Activated naive CD4-positive, alpha-beta T cell treated with anti-CD3 and anti-CD28 coated beads for 36 hours (primary cell): ENCODE measurements at regions of chrX and their contacts with region 1.

Region 1: DNA sequence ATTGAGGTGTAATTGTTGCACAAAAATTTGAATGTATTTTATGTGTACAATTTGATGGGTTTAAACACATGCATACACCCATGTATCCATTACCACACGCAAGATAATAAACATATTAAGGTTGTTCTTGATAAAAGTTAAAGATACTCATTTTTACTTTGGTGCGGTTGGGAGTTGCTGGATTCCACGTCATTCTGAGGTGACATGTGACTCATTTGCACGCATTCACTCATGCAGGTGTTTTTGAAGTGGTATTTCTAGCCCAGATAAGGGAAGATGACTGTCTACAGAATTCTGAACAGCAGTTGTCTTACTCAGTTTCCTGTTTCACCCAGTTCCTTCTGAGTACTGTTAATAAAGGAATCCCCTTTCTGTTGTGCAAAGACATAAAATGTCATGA is 142.0 kb downstream of the RTL3 start:
- DNase-seq: peak; percentile 76
- H3K4me3 Mint-ChIP-seq: no peak overlapping the region
- H3K27ac Mint-ChIP-seq: peak overlapping the region; percentile 86
- H3K4me1 Mint-ChIP-seq: peaks cover 40% of the 10 kb centered on the region
- H3K27me3 Mint-ChIP-seq: no peaks in the 10 kb centered on the region

Region 2: GRCh38 chrX:77293331-77293995 is 1223.7 kb before region 1 on chrX:
- CTCF ChIA-PET with region 1: no interaction called
- intact Hi-C with region 1: no loop called
- DNase-seq: no peak
- H3K4me3 Mint-ChIP-seq: no peak overlapping the region
- H3K27ac Mint-ChIP-seq: no peak overlapping the region
- H3K4me1 Mint-ChIP-seq: no peaks in the 10 kb centered on the region
- H3K27me3 Mint-ChIP-seq: no peaks in the 10 kb centered on the region

Region 3: DNA sequence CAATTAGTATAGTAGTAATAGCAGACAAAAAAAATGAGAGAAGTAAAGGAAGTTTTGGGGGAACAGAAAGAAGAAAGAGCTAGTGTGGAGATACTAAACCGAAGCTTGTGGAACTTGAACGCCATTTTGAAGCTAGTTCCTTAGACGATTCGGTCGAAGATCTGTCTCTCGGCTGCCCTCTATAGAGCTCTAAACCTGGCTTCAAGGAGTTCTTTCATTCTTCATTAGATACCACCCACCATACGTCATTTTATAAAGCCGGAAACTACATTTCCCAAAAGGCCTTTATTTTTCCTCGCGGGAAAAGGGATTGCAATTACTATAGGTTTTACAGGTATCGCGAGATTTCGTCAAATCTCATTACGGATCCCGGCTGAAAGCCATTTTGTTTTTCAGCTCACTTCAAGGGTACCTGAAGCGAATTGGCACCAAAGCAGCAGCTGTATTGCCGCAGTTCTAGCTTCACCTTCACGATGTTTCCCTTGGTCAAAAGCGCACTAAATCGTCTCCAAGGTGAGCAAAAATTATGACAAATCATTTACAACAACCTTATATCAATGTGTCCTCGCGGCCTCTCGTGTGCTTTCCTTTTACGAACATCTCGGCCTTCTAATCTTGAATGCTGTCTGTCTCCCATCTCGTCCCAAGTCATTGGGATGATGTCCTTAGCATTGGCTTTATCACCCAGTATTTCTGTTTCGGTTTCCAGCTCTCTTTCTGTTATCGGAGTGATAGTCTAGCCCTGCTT is 617.9 kb before region 1 on chrX and contains the start of gene COX7B:
- CTCF ChIA-PET with region 1: no interaction called
- intact Hi-C with region 1: loop called (anchors 5 kb)
- DNase-seq: peak; percentile 76
- H3K4me3 Mint-ChIP-seq: peak within 1 kb of the TSS; percentile 92
- H3K27ac Mint-ChIP-seq: peak within 1 kb of the TSS; percentile 95
- H3K4me1 Mint-ChIP-seq: peaks cover 17% of the 10 kb centered on the region
- H3K27me3 Mint-ChIP-seq: no peaks in the 10 kb centered on the region
- total RNA-seq, gene COX7B: 363 to 367 TPM

Region 4: DNA sequence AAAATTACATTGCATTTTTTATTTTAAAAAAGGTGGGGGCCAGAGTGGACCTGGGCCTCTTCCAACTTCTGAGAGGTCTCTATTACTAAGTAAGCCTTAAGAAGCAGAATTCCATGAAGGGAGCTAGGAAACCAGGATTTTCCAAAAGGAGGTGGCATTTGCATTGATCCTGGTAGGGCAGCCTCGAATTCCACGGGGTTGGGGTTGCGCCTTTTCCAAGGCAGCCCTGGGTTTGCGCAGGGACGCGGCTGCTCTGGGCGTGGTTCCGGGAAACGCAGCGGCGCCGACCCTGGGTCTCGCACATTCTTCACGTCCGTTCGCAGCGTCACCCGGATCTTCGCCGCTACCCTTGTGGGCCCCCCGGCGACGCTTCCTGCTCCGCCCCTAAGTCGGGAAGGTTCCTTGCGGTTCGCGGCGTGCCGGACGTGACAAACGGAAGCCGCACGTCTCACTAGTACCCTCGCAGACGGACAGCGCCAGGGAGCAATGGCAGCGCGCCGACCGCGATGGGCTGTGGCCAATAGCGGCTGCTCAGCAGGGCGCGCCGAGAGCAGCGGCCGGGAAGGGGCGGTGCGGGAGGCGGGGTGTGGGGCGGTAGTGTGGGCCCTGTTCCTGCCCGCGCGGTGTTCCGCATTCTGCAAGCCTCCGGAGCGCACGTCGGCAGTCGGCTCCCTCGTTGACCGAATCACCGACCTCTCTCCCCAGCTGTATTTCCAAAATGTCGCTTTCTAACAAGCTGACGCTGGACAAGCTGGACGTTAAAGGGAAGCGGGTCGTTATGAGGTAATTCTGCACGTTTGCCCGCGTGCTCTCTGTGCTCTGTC is 413.3 kb before region 1 on chrX and contains the start of gene PGK1:
- CTCF ChIA-PET with region 1: no interaction called
- intact Hi-C with region 1: loop called (anchors 2 kb)
- DNase-seq: peak; percentile 95
- H3K4me3 Mint-ChIP-seq: peak within 1 kb of the TSS; percentile 95
- H3K27ac Mint-ChIP-seq: peak within 1 kb of the TSS; percentile 92
- H3K4me1 Mint-ChIP-seq: peaks cover 28% of the 10 kb centered on the region
- H3K27me3 Mint-ChIP-seq: no peaks in the 10 kb centered on the region
- total RNA-seq, gene PGK1: 744 to 766 TPM

Region 5: GRCh38 chrX:78375894-78376293 is 141.2 kb before region 1 on chrX:
- CTCF ChIA-PET with region 1: no interaction called
- intact Hi-C with region 1: loop called (anchors 2 kb)
- DNase-seq: no peak
- H3K4me3 Mint-ChIP-seq: no peak overlapping the region
- H3K27ac Mint-ChIP-seq: no peak overlapping the region
- H3K4me1 Mint-ChIP-seq: peaks cover 22% of the 10 kb centered on the region
- H3K27me3 Mint-ChIP-seq: no peaks in the 10 kb centered on the region

Region 6: DNA sequence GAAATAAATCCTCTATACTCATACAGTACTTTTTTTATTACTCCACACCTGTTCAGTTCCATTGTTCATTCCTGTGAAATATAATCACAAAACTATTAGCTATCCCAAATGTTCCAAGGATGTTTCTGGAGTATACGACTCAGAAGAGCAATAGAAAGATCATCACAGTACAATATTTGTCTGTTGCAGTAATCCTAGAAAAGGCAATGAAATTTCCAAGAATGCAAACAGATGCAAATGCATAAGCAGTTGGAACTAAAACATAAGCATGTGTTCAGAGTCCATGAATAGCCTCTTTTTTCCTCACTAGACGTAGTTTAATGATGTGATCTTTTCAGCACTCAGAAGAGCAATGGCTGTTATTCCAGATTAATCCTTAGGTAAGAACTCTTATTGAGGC is 86.8 kb after region 1 on chrX:
- CTCF ChIA-PET with region 1: no interaction called
- intact Hi-C with region 1: no loop called
- DNase-seq: no peak
- H3K4me3 Mint-ChIP-seq: no peak overlapping the region
- H3K27ac Mint-ChIP-seq: no peak overlapping the region
- H3K4me1 Mint-ChIP-seq: no peaks in the 10 kb centered on the region
- H3K27me3 Mint-ChIP-seq: no peaks in the 10 kb centered on the region

Region 7: GRCh38 chrX:78945186-78945912 is 428.2 kb after region 1 on chrX and contains the start of gene P2RY10:
- CTCF ChIA-PET with region 1: no interaction called
- intact Hi-C with region 1: loop called (anchors 2 kb)
- DNase-seq: peak; percentile 45
- H3K4me3 Mint-ChIP-seq: peak within 1 kb of the TSS; percentile 94
- H3K27ac Mint-ChIP-seq: peak within 1 kb of the TSS; percentile 98
- H3K4me1 Mint-ChIP-seq: peaks cover 54% of the 10 kb centered on the region
- H3K27me3 Mint-ChIP-seq: no peaks in the 10 kb centered on the region
- total RNA-seq, gene P2RY10: 61.9 to 63.3 TPM

Region 8: DNA sequence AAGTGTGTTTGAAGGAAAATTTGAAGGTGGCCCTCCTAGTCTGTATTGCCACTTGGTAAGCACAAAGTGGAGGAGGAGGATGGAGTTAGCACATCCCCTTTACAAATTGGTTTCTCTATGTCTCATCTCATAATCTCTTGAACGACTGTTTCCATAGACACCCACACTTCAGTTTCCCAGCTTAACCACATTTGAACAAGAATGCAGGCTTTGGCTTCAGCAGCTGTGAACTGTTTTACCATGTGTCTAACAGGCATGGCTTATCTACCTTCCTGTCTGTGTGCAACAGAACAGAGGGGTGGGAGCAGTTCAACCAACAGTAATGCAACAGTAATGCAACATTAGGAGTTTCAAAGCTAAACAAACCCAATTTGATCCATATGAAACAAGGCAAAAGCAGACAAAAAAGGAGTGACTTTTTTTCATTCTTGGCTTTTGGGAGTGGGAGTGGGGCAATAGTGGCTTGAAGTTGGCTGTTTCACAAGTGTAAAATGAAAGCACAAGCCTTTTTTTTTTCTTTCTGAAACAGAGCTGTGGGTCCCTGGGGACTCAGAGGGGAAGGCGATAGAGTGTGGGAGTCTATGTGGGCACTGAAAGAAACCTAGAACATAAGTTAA is 742.1 kb after region 1 on chrX:
- CTCF ChIA-PET with region 1: no interaction called
- intact Hi-C with region 1: loop called (anchors 5 kb)
- DNase-seq: peak; percentile 68
- H3K4me3 Mint-ChIP-seq: peak overlapping the region; percentile 58
- H3K27ac Mint-ChIP-seq: peak overlapping the region; percentile 91
- H3K4me1 Mint-ChIP-seq: peaks cover 83% of the 10 kb centered on the region
- H3K27me3 Mint-ChIP-seq: no peaks in the 10 kb centered on the region